ENCODE measurements at regions of chr13 and their contacts with region 1.

Region 1: GRCh38 chr13:50081679-50082425 is 66.6 kb downstream of the KCNRG start:
- DNase-seq: peak; percentile 94
- ATAC-seq: peak; percentile 89
- H3K4me3 ChIP-seq: peak overlapping the region; percentile 71 to 82
- H3K27ac ChIP-seq: peak overlapping the region; percentile 96
- H3K4me1 ChIP-seq: peaks cover 15% of the 10 kb centered on the region
- H3K27me3 ChIP-seq: no peaks in the 10 kb centered on the region
- CTCF ChIP-seq: peak; percentile 23

Region 2: DNA sequence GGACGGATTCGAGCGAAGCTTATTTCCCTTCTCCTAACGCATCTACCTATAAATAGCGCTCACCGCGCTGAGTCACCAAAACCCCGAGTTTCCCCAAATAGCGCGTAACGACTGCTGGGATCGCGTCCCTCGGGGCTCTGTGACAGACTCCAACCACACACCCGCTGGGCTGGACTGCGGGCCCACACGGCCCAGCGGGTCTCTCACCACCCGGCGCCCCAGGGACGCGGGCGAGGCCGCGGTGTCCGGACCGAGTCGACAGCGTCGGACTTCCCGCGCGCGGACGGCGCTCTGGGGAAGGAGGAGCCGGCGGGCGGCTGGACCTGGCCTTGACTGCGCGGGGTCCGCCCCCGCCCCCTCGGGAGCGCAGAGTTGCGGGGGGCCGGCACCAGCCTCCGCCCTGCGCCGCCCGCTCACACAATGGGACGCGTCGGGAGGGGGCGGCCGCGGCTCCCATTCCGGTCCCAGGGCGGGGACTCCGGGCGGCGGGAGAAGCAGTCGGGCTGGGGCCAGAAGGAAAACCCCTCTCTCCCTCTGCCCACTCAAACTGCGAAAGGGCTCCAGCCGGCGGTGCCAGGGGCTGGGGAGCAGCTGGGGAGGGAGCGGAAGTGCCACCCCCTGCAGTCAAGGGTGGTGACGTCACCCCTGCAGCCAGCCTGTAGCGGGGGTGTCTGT is 42.1 kb after region 1 on chr13:
- CTCF ChIA-PET with region 1: no interaction called
- POLR2A ChIA-PET with region 1: no interaction called
- in situ Hi-C with region 1: no loop called
- intact Hi-C with region 1: loop called (anchors 5 kb)
- DNase-seq: no peak
- ATAC-seq: peak; percentile 90
- H3K4me3 ChIP-seq: peak overlapping the region; percentile 74 to 81
- H3K27ac ChIP-seq: peak overlapping the region; percentile 97
- H3K4me1 ChIP-seq: peaks cover 33% of the 10 kb centered on the region
- H3K27me3 ChIP-seq: no peaks in the 10 kb centered on the region
- CTCF ChIP-seq: no peak; the same call in 1 of the 2 replicates

Region 3: GRCh38 chr13:50179977-50180376 is 98.1 kb after region 1 on chr13:
- CTCF ChIA-PET with region 1: no interaction called
- POLR2A ChIA-PET with region 1: no interaction called
- in situ Hi-C with region 1: no loop called
- intact Hi-C with region 1: no loop called
- DNase-seq: no peak
- ATAC-seq: no peak
- H3K4me3 ChIP-seq: no peak overlapping the region
- H3K27ac ChIP-seq: no peak overlapping the region
- H3K4me1 ChIP-seq: no peaks in the 10 kb centered on the region
- H3K27me3 ChIP-seq: no peaks in the 10 kb centered on the region
- CTCF ChIP-seq: no peak

Region 4: DNA sequence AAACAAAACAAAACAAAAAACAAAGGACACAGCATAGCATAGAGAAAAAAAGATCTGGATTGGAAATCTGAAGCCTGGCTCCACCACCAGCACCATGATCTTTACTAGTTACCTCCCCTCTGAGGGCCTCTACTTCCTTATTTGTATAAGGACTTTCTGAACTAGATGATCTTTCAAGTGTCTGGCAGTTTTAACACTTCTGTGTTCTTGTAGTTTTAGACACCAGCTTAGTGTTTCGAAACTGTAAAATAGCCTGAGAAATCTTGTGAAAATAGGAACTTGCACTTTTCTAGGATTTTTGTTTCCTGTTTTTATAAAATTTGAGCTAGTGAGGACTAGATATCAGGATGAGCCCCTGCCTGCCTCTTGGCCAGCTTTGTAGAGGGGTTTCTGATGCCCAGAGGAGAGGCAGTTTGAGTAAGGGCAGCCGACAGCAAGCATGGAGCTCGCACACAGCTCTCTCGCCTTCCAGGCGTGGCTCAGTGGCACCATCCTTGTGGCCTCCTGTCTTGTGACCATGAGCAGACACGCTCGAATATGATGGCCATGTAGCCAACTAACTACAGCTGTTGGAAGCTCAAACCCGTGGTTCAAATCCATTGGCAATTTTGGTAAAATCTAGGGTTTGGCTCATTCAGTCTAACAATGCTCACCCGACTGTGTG is 252.4 kb after region 1 on chr13:
- CTCF ChIA-PET with region 1: no interaction called
- POLR2A ChIA-PET with region 1: no interaction called
- in situ Hi-C with region 1: no loop called
- intact Hi-C with region 1: no loop called
- DNase-seq: no peak
- ATAC-seq: no peak
- H3K4me3 ChIP-seq: no peak overlapping the region
- H3K27ac ChIP-seq: peak overlapping the region; percentile 57; the same call in 1 of the 2 replicates
- H3K4me1 ChIP-seq: no peaks in the 10 kb centered on the region
- H3K27me3 ChIP-seq: no peaks in the 10 kb centered on the region
- CTCF ChIP-seq: no peak